Ovary (tissue), 10 donors: ENCODE measurements at regions of chr5 and their contacts with region 1.

Region 1: DNA sequence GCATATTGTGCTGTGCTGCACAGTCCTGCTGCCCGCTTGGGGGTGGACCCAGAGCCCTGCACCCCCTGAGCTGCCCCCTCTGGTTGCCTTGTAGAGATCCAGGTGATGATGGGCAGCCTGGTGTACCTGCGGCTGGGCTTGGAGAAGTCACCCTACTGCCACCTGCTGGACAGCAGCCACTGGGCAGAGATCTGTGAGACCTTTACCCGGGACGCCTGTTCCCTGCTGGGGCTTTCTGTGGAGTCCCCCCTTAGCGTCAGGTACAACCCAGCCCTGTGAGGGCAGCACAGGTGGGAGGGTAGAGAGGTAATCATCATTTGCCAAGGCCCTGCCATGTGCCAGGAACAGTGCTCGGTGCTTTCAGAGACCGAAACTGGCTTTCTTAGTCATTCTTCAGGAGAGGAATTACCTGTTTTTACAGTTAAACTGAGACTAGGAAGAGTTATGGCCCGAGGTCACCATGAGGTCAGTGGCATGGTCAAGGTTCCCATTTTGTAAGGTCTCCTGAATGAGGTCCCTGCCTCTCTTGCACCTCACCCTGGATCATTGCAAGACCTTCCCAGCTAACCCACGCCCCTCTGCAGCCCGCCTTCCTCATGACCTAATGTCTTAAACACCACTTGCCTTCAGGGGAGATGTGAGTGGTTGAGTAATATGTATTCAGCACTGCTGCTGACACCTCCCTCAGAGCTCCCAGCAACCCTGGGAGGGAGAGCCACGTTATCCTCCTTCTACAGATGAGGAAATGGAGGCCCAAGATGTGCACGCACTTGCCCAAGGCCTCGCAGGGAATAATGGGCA is 7.5 kb downstream of the NHP2 start:
- DNase-seq: peak; percentile 33 to 63 (median 47)
- H3K4me3 ChIP-seq: no peak overlapping the region
- H3K27ac ChIP-seq: no peak overlapping the region
- H3K4me1 ChIP-seq: no peaks in the 10 kb centered on the region
- H3K27me3 ChIP-seq: no peaks in the 10 kb centered on the region
- CTCF ChIP-seq: peak in 1 of 3 donors; percentile 30
- EP300 ChIP-seq: no peak
- POLR2A ChIP-seq: no peak

Region 2: GRCh38 chr5:178221282-178221681 is 75.1 kb after region 1 on chr5:
- intact Hi-C with region 1: loop called in 1 of 4 experiments (anchors 10 kb)
- DNase-seq: no peak
- H3K4me3 ChIP-seq: no peak overlapping the region
- H3K27ac ChIP-seq: no peak overlapping the region
- H3K4me1 ChIP-seq: no peaks in the 10 kb centered on the region
- H3K27me3 ChIP-seq: no peaks in the 10 kb centered on the region
- CTCF ChIP-seq: no peak
- EP300 ChIP-seq: no peak
- POLR2A ChIP-seq: no peak